ENCODE measurements at regions of chr12 and their contacts with region 1.

Region 1: DNA sequence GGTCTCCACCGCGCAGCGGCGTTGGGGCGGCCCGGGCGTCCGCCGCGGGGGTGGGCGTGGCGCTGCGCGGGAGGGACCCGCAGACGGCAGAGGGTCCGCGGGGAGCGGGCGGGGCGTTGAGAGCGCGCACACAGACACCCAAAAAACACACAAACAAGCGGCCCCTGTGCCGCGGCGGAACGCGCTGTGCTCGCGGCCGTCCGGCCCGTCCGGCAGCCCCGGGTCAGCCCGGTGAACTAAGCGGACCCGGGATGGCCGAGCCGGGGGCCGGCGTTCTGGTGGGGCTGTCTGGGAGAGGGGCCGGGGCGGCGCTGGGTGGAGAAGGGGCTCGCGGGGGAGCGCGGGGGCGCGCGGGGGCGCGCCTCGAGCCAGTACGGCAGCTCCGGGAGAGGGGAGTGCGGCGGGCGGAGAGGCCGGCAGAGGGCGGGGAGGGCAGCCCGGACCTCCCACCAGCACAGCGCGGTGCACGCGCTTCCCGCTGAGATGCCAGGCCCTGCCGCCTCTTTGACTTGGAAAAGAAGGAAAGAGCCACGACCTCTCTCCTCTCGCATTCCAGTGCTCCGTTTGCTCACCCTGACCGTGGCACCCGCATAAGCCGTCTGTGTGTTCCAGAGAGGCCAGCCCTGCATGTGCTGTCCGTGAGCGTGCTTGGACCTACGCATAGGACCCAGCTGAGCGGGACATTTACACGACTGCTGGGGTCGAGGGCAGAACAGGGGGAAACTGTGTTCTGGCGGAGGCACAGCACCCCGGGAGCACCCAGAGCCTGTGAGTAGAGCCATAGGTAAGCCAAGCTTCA is 10.3 kb downstream of the SLC6A12 start:
- DNase-seq: peak in 1 of 2 experiments; percentile 78
- H3K4me3 ChIP-seq: peak overlapping the region; percentile 55 to 80 (median 62)
- H3K27ac ChIP-seq: no peak overlapping the region
- H3K4me1 ChIP-seq: peaks cover 7 to 18% (median 12%) of the 10 kb centered on the region in 4 experiments
- H3K27me3 ChIP-seq: peaks cover 5 to 51% (median 33%) of the 10 kb centered on the region in 4 experiments
- CTCF ChIP-seq: peak; percentile 13 to 15 (median 14); a peak in 3 of 4 replicates
- EP300 ChIP-seq: no peak
- POLR2A ChIP-seq: no peak
- RAD21 ChIP-seq: no peak

Region 2: GRCh38 chr12:176321-177181 is 27.1 kb before region 1 on chr12:
- CTCF ChIA-PET with region 1: interaction called, 10 read pairs
- POLR2A ChIA-PET with region 1: interaction called, 5 read pairs
- DNase-seq: no peak
- H3K4me3 ChIP-seq: no peak overlapping the region
- H3K27ac ChIP-seq: no peak overlapping the region
- H3K4me1 ChIP-seq: peaks cover 0 to 14% (median 7%) of the 10 kb centered on the region in 4 experiments; a peak in 6 of 7 replicates
- H3K27me3 ChIP-seq: no peaks in the 10 kb centered on the region; a peak in 1 of 7 replicates
- CTCF ChIP-seq: no peak
- EP300 ChIP-seq: no peak
- POLR2A ChIP-seq: no peak
- RAD21 ChIP-seq: no peak